Left ventricle myocardium superior (tissue), 1 donor: ENCODE measurements at regions of chr5 and their contacts with region 1.

Region 1: DNA sequence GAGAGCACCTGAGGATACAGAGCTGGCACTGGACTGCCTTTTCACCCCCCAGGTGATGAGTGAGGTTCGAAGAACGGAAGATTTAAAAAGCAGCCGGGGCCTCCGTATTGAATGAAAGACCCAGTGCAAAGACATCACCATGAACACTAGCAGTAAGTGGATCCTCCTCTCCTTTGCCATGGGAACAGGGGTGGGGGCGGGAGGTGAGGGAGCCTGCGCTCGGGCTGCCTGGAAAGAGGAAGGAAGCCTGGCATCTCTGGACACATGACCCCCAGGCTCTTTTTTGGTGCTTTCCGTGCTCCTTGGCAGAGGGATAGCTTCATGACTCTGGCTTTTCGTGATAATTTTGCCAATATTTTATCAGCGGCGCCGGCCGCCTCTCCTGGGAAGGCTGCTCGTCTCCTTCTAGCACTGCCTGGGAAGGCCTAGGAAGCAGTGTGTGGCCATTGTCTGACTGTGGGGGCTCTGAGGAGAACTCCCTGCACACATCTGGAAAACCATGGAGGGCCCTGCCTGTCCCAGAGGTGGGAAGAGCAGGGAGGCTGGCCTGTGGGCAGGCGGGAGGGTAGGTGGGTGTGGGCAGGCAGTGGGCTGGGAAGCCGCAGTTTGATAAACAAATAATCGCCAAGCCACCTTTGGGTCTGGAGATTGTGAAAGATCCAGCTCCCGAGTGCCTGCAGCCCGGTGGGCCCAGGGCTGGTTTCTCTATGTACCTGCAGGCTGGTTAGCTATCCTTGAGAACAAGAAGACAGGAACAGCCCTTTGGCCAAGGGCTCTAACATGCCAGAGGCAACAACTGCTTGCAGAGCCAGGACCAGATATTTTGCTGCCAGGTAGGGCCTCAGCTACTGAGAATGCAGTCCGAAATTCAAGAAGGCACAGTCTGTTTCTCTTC is 911 bp downstream of the ABLIM3 start:
- DNase-seq: peak; percentile 54
- ATAC-seq: peak; percentile 76

Region 2: GRCh38 chr5:149228618-149229297 is 86.6 kb after region 1 on chr5:
- intact Hi-C with region 1: loop called (anchors 2 kb)
- DNase-seq: no peak
- ATAC-seq: peak; percentile 86

Region 3: DNA sequence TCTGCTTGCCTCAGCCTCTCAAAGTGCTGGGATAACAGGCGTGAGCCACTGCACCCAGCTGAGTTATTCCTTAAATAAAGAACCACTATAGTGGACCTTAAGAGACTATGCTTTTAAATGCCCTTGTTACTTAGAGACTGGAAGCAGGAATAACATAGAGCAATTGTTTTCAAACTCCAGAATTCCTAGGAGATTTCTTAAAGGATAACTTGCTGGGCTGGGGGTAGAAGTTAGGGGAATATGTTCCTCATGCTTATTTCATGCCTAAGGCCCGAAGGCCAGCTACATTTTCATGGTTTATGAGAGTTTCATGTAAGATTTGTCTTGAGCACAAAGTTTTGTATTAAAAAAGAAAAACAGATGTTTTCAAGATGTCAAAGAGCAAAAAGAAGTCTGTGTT is 360.8 kb after region 1 on chr5:
- intact Hi-C with region 1: no loop called
- DNase-seq: no peak
- ATAC-seq: no peak